Activated CD4-positive, alpha-beta T cell treated with anti-CD3 and anti-CD28 coated beads, Interleukin-2, amount 10 ng/mL, durations not matched to agents 24 days and 14 days (primary cell): ENCODE measurements at regions of chr19 and their contacts with region 1.

Region 1: GRCh38 chr19:43503501-43504425 is 783 bp downstream of the PHLDB3 start:
- DNase-seq: peak; percentile 100
- H3K4me3 Mint-ChIP-seq: peak overlapping the region; percentile 93
- H3K27ac Mint-ChIP-seq: peak overlapping the region; percentile 94
- H3K4me1 Mint-ChIP-seq: peaks cover 25% of the 10 kb centered on the region
- H3K27me3 Mint-ChIP-seq: no peaks in the 10 kb centered on the region

Region 2: DNA sequence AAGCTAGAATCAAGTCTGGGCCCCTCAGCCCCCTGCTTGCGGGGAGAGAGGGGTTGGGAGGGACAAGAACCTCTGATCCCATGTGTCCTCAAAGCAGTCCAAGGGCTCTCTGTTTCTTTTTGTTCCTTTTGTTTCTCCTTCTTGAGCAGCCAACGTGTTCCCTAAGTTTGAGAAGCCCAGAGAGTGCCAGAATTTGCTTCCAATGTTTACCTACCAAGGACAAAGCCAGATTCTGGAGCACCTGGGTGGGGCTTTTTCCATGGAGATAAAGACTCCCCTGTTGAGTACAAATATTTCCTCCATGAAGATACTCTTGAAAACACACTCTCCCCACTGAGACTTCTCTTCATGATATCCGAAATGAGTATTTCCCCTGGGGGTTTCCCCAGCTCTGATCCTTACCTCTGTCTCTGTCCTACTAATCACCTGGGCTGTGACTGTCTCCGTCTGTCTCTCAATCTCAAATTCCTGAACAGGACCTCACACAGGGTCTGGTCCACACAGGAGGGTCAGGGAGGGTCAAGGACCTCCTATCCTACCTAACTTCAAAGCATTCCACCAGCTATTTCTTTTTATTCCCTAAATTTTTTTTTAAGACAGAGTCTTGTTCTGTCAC is 122.9 kb before region 1 on chr19:
- intact Hi-C with region 1: no loop called
- DNase-seq: no peak
- H3K4me3 Mint-ChIP-seq: no peak overlapping the region
- H3K27ac Mint-ChIP-seq: no peak overlapping the region
- H3K4me1 Mint-ChIP-seq: peaks cover 2% of the 10 kb centered on the region
- H3K27me3 Mint-ChIP-seq: no peaks in the 10 kb centered on the region

Region 3: DNA sequence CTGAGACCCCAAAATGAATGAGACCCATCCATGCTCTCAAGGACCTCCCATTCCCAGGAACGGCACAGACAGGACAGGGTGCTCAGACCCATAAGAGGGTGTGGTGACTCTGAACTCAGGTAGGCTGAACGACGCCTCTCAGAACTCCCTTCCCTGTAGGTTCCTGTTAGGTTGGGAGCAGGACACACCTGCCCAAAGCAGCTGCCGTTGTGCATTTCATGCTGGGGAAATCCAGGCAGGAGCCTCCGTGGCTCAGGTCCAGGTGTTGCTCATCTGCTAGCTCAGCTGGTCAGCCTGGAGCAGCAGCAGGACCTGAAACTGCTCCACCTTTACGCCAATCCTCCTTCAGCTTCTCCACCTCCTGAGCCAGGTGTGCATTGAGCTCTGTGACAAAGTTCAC is 108.2 kb before region 1 on chr19:
- intact Hi-C with region 1: no loop called
- DNase-seq: no peak
- H3K4me3 Mint-ChIP-seq: no peak overlapping the region
- H3K27ac Mint-ChIP-seq: no peak overlapping the region
- H3K4me1 Mint-ChIP-seq: no peaks in the 10 kb centered on the region
- H3K27me3 Mint-ChIP-seq: peaks cover 4% of the 10 kb centered on the region

Region 4: GRCh38 chr19:43446746-43447489 is 56.8 kb before region 1 on chr19:
- intact Hi-C with region 1: loop called (anchors 1 kb)
- DNase-seq: peak; percentile 93
- H3K4me3 Mint-ChIP-seq: no peak overlapping the region
- H3K27ac Mint-ChIP-seq: peak overlapping the region; percentile 44
- H3K4me1 Mint-ChIP-seq: peaks cover 25% of the 10 kb centered on the region
- H3K27me3 Mint-ChIP-seq: no peaks in the 10 kb centered on the region

Region 5: GRCh38 chr19:43474986-43475705 is 28.6 kb before region 1 on chr19:
- intact Hi-C with region 1: loop called (anchors 2 kb)
- DNase-seq: peak; percentile 99
- H3K4me3 Mint-ChIP-seq: peak overlapping the region; percentile 71
- H3K27ac Mint-ChIP-seq: peak overlapping the region; percentile 73
- H3K4me1 Mint-ChIP-seq: peaks cover 13% of the 10 kb centered on the region
- H3K27me3 Mint-ChIP-seq: no peaks in the 10 kb centered on the region

Region 6: DNA sequence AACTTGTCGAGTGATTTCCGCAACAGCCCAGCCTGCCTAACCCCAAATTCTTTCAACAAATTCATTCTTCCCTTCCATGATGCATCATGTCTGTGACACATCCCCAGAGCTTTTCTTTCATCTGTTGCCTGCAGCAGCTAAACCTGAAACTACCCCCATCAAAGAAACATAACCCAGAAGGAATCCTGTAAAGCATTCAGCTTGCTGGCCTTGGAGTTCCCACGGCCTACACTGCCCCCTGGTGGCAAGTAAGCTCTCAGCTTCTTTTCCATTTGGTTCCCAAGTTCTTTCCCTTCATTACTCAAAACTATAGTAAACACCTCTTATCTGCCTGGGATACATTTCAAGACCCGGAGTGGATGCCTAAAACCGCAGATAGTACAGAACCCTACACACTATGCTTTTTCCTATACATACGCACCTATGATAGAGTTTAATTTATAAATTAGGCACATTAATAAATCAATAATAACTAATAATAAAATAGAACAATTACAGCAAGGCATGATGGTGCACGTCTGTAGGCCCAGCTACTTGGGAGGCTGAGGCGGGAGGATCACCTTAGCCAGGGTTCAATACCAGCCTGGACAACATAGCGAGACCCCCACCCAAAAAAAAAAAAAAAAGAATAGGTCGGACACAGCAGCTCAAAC is 15.8 kb after region 1 on chr19:
- intact Hi-C with region 1: loop called (anchors 1 kb)
- DNase-seq: peak; percentile 93
- H3K4me3 Mint-ChIP-seq: no peak overlapping the region
- H3K27ac Mint-ChIP-seq: peak overlapping the region; percentile 57
- H3K4me1 Mint-ChIP-seq: peaks cover 16% of the 10 kb centered on the region
- H3K27me3 Mint-ChIP-seq: no peaks in the 10 kb centered on the region

Region 7: DNA sequence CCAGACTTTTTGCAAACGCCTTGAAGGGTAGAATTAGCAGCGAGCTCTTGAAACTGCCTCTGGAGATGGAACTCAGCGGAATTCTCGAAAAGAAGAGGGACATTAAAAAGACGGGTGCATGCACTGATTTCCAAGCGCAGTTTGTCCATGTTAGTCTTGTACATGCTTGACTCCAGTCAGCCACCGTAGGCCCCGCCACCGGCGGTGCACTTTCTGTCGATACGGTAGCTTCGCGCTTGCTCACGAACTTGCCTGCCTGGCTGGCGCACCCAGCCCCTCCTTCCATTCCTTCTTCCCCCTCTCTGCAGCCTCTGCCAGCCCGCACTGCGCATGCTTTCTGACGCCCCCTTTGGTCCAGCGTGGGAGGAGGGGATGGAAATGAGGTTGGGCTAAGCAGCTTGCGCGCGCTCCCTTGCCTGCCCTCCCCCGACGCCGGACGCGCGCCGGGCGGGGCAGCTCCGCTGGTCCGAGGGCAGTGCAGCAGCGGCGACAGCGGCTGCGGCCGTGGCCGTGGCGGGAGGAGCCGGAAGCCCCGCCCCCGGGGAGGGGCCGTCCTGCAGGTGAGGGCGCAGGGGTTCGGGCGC is 29.3 kb after region 1 on chr19 and contains the start of gene ZNF575:
- intact Hi-C with region 1: loop called (anchors 2 kb)
- DNase-seq: peak; percentile 95
- H3K4me3 Mint-ChIP-seq: peak within 1 kb of the TSS; percentile 83
- H3K27ac Mint-ChIP-seq: peak within 1 kb of the TSS; percentile 95
- H3K4me1 Mint-ChIP-seq: peaks cover 20% of the 10 kb centered on the region
- H3K27me3 Mint-ChIP-seq: no peaks in the 10 kb centered on the region
- total RNA-seq, gene ZNF575: 1.8 and 2.4 TPM in 2 replicates